Head of caudate nucleus (tissue), 42 donors: ENCODE measurements at regions of chr15 and their contacts with region 1.

Region 1: GRCh38 chr15:51380999-51381795 is 39.7 kb downstream of the GLDN start:
- DNase-seq: peak; percentile 40 to 92 (median 78)

Region 2: GRCh38 chr15:51229907-51230330 is 151.3 kb before region 1 on chr15:
- intact Hi-C with region 1: loop called (anchors 5 kb)
- DNase-seq: peak in 11 of 42 donors; percentile 11 to 66 (median 27)

Region 3: DNA sequence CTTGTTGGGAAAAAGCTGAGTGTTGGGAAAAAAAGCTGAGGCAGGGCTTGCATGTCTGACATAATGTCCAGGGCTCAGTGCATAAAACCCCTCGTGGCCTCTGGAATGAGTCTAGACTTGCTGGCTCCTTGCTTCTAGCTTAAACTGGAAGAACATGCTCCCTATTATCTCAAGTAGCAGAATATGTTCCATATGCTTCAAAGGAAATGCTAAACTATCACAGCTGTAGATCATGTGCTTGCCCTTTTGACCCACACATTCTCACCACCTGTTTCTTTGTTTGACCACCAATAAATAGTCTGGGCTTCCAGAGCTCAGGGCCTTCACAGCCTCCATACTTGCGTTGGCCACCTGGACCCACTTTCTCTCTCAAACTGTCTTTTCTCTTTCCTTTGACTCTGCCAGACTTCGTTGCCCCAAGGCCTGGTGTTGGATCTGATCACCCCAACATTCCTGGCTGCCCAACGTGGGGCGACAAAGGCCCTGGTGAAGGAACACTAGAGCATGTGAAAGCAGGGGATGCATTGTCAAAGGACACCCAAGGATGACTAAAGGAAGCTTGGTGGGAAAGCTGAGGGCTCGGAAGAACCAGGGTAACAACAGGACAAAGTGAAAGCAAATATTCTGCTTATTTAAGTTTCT is 98.8 kb before region 1 on chr15:
- intact Hi-C with region 1: loop called (anchors 2 kb)
- DNase-seq: no peak